Uterus (tissue), 4 donors: ENCODE measurements at regions of chr18 and their contacts with region 1.

Region 1: DNA sequence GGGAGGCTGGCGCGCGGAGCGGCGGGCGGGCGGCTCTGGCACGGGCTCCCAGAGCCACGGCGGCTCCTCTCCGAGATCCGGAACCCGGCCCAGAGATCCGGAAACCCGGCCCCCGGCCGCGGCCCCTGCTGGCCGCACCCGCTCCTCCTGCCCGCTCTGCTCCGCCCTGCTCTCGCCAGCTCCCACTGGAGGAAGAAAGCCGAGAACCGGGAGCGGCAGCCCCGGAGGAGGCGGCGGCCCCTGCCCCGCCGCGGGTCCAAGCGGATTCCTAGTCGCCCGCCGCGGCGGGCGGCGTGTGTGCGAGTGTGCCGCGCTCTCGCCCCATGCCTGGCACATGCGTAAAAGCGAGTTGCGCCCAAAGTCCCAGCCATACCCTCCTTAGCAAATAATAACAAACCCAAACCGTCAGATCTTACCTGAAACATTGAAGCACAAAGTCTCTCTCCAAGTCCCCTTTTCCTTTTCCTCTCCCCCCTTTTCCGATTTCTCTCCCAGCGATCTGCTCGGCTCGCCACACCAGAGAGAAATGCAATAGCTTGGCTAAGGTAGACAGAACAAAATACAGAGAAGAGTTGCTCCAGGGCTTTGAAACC is 108.7 kb upstream of the KCTD1 start:
- DNase-seq: peak; percentile 71 to 78
- H3K4me3 ChIP-seq: peak overlapping the region; percentile 52 to 73
- H3K27ac ChIP-seq: peak overlapping the region; percentile 86 to 94
- H3K4me1 ChIP-seq: no peaks in the 10 kb centered on the region
- H3K27me3 ChIP-seq: no peaks in the 10 kb centered on the region
- CTCF ChIP-seq: peak in 3 of 4 experiments; percentile 14 to 60 (median 41)
- POLR2A ChIP-seq: peak; percentile 22 to 30

Region 2: DNA sequence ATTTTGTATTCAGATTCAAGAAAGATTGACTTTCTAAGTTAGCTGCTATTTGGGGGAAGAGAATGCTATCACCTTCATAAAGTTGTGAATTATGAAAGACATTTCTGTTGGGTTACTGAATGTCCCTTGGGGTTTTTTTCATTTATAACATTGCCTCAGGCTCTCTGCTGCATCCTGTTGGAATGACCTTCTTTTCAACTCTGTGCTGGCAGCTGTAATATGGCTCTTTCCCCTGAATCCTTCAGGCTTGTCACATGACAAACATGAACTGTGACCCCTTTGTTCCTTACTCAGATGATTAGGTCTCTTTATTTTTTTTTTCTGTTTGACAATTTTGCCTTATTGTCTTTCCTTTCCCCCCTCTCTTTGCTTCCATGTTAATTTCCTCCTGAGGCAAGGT is 271.0 kb before region 1 on chr18:
- intact Hi-C with region 1: loop called (anchors 5 kb)
- DNase-seq: no peak
- H3K4me3 ChIP-seq: no peak overlapping the region
- H3K27ac ChIP-seq: no peak overlapping the region
- H3K4me1 ChIP-seq: no peaks in the 10 kb centered on the region
- H3K27me3 ChIP-seq: no peaks in the 10 kb centered on the region
- CTCF ChIP-seq: no peak
- POLR2A ChIP-seq: no peak

Region 3: DNA sequence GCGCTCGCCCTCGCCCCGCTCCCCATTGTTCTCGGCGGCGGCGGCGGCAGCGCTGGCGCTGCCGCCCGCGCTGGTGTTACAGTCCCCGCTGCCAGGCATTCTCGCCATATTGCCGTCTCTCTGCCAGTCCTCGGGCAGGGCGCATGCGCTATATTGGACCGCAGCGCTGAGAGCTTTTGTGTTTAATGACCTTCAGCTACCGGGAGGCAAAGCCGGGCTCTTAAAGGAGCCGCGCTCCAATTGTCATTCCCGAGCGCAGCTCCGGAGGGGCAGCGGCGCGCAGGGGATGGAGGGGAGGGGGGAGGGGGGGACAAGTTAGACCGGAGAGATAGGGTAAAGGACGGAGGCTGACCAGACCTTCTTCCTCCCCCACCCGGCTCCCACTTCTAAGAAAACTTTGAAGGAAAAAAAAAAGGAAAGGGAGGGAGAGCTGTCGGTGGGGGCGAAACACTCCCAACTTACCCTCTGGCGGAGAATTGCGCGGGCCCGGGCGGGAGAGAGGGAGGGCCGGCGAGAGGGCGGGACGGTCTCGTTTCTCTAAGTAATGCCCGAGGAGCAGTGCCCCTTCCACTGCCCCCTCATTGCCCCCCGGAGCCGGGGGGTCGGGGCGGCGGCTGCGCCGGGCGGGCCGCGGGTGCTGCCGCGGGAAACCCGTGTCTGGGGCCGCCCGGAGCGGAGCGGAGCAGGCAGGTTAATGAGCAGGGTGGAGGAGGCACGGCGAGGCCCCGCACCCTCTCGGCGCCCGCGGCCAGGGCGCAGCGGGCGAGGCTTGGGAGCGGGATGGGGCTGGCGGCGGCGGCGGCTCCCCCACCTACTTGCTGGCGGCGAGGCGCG is 108.4 kb before region 1 on chr18 and contains the start of gene KCTD1:
- intact Hi-C with region 1: loop called (anchors 10 kb)
- DNase-seq: peak; percentile 66 to 67
- H3K4me3 ChIP-seq: peak within 1 kb of the TSS; percentile 58 to 68
- H3K27ac ChIP-seq: peak within 1 kb of the TSS; percentile 53 to 67
- H3K4me1 ChIP-seq: peaks cover 0 to 12% of the 10 kb centered on the region in 2 donors
- H3K27me3 ChIP-seq: no peaks in the 10 kb centered on the region
- CTCF ChIP-seq: no peak
- POLR2A ChIP-seq: no peak
- total RNA-seq, gene KCTD1: 1.2 to 41.3 (median 11.7) TPM

Region 4: DNA sequence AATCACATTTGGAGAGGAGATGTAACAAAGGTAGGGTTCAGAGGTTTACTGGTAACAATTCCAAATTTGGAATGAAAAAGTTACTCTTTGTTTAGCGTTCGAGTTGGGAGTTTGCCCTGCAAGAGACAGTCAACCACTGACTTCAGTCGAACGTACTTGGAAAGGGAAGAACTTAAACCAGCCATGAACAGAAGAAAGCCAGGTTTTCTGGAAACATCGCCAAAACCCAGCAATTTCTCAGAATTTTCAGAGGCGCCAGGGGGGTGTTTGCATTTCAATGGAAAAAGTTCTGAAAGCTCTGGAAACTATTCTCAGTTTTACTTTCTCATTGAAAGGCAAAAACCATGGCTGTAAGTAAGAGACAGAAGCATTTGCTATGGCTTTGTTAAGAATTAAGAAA is 237.0 kb after region 1 on chr18:
- intact Hi-C with region 1: no loop called
- DNase-seq: no peak
- H3K4me3 ChIP-seq: no peak overlapping the region
- H3K27ac ChIP-seq: no peak overlapping the region
- H3K4me1 ChIP-seq: no peaks in the 10 kb centered on the region
- H3K27me3 ChIP-seq: no peaks in the 10 kb centered on the region
- CTCF ChIP-seq: no peak
- POLR2A ChIP-seq: no peak